Right cardiac atrium (tissue), 5 donors: ENCODE measurements at regions of chr9 and their contacts with region 1.

Region 1: GRCh38 chr9:5437254-5438216 is at the start of gene PLGRKT:
- DNase-seq: peak; percentile 97 to 98 (median 98)
- ATAC-seq: peak; percentile 99 to 100
- H3K4me3 ChIP-seq: peak within 1 kb of the TSS; percentile 61
- H3K27ac ChIP-seq: peak within 1 kb of the TSS; percentile 91
- H3K4me1 ChIP-seq: peaks cover 5% of the 10 kb centered on the region
- H3K27me3 ChIP-seq: no peaks in the 10 kb centered on the region
- total RNA-seq, gene PLGRKT: 31.5 to 40.3 (median 34.1) TPM

Region 2: GRCh38 chr9:4750023-4750673 is 687.4 kb before region 1 on chr9:
- intact Hi-C with region 1: loop called in 1 of 4 experiments (anchors 10 kb)
- DNase-seq: no peak
- ATAC-seq: peak in 1 of 2 donors; percentile 66
- H3K4me3 ChIP-seq: no peak overlapping the region
- H3K27ac ChIP-seq: no peak overlapping the region
- H3K4me1 ChIP-seq: peaks cover 2% of the 10 kb centered on the region
- H3K27me3 ChIP-seq: no peaks in the 10 kb centered on the region

Region 3: GRCh38 chr9:5375091-5375490 is 62.4 kb before region 1 on chr9:
- intact Hi-C with region 1: no loop called
- DNase-seq: no peak
- ATAC-seq: no peak
- H3K4me3 ChIP-seq: no peak overlapping the region
- H3K27ac ChIP-seq: no peak overlapping the region
- H3K4me1 ChIP-seq: no peaks in the 10 kb centered on the region
- H3K27me3 ChIP-seq: no peaks in the 10 kb centered on the region

Region 4: DNA sequence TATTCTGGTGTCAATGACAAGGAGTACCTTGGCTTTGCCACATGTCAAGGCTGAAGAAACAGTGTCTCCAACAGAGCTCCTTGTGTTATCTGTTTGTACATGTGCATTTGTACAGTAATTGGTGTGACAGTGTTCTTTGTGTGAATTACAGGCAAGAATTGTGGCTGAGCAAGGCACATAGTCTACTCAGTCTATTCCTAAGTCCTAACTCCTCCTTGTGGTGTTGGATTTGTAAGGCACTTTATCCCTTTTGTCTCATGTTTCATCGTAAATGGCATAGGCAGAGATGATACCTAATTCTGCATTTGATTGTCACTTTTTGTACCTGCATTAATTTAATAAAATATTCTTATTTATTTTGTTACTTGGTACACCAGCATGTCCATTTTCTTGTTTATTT is 32.6 kb after region 1 on chr9:
- intact Hi-C with region 1: no loop called
- DNase-seq: no peak
- ATAC-seq: no peak
- H3K4me3 ChIP-seq: no peak overlapping the region
- H3K27ac ChIP-seq: no peak overlapping the region
- H3K4me1 ChIP-seq: no peaks in the 10 kb centered on the region
- H3K27me3 ChIP-seq: no peaks in the 10 kb centered on the region

Region 5: DNA sequence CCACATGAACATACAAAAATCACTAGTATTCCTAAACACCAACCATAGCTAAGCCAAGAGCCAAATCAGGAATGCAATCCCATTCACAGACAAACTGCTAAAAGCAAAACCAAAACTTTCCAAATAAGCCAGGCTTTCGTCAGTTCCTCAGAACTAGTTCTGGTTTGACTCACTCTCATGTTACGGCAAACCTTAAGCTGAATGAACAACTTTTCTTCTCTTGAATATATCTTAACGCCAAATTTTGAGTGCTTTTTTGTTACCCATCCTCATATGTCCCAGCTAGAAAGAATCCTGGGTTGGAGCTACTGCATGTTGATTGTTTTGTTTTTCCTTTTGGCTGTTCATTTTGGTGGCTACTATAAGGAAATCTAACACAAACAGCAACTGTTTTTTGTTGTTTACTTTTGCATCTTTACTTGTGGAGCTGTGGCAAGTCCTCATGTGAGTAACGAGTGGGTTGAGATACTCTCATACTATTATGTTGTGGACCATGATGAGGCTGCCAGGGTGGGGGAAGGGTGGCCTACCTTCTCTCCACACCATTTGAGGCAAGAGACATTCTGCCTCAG is 72.9 kb after region 1 on chr9 and contains the start of gene PDCD1LG2:
- intact Hi-C with region 1: no loop called
- DNase-seq: peak in 1 of 3 donors; percentile 72
- ATAC-seq: peak; percentile 68 to 77
- H3K4me3 ChIP-seq: peak within 1 kb of the TSS; percentile 33
- H3K27ac ChIP-seq: peak within 1 kb of the TSS; percentile 59
- H3K4me1 ChIP-seq: peaks cover 7% of the 10 kb centered on the region
- H3K27me3 ChIP-seq: no peaks in the 10 kb centered on the region
- total RNA-seq, gene PDCD1LG2: 2.3 to 3.3 (median 2.5) TPM

Region 6: DNA sequence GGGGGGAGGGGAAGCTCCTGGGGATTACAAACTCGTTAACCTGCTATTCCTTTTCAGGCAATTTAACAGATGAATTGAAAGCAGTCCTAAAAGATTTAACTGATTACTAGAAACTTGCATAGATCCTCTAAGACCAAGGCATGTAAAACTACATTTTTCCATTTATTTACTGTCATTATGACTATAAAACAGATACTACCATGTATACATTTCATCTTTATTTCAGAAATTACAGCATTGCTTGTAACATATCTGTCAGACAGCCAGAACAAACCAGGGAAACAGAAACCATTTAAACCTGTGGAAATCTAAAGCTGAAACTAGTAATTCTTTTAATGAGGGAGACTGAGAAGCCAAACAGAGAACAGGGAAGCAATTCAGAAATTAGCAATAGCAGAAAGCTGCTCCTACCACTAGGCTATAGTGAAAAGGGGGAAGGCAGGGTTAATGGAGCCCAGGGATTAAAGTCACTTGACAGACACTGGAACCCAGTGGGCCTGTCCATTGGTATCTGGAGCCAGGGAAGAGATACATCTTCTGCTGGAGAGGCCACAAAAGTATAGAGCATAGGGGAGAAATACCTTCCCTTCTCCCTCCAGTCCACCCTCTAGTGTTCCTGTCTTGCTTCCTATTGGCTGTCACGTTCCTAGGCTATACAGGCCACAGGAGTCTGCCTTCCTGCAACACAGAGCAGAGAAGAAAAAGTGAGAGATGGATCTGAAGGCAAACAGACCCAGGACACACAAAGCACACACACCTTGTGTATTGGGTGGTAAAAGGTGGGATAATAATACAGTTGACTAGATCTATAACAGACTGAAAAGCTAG is 106.6 kb after region 1 on chr9:
- intact Hi-C with region 1: no loop called
- DNase-seq: no peak
- ATAC-seq: no peak
- H3K4me3 ChIP-seq: no peak overlapping the region
- H3K27ac ChIP-seq: no peak overlapping the region
- H3K4me1 ChIP-seq: no peaks in the 10 kb centered on the region
- H3K27me3 ChIP-seq: no peaks in the 10 kb centered on the region